A673 (cell line): ENCODE measurements at regions of chr1 and their contacts with region 1.

Region 1: DNA sequence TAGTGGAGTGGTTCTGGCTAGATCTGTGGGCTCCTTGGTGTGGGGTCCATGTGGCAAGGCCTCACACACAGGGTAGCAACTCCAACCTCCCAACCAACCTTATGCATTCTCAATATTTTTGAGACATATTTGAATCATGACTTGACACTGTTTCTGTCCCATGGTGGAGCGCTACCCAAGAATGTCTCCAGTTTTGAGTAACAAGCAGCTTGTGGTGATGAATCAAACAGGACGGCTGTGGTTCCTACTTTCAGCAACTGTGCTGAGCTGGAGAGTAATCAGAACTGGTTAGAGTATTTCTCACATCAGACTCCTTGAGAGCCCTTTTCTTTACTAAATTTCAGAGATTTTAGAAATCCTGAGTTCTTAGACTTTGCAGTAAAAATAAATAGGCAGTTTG is 3.1 kb downstream of the LCE3D start:
- DNase-seq: no peak
- H3K4me3 ChIP-seq: no peak overlapping the region
- H3K27ac ChIP-seq: no peak overlapping the region
- H3K4me1 ChIP-seq: no peaks in the 10 kb centered on the region
- H3K27me3 ChIP-seq: peaks cover 17% of the 10 kb centered on the region
- CTCF ChIP-seq: no peak

Region 2: DNA sequence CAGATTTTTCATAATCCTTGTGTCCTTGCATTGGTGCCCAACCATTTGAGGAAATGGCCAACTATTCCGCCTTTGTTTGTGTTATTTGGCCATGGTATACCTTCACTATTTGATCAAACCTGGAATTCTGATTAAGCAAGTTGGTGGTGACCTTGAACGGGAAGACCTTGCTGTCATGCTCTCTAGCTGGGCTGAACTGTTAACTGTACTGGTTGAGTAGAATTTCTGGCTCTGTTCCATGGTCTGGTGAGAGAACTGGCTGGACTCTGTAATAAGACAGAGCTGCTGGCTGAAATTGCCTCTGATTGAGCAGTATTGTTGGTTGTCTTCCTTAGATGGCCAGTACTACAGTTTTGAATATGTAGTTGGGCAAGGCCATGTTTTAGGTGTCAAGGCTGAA is 19.8 kb after region 1 on chr1:
- CTCF ChIA-PET with region 1: no interaction called
- POLR2A ChIA-PET with region 1: no interaction called
- intact Hi-C with region 1: no loop called
- DNase-seq: no peak
- H3K4me3 ChIP-seq: no peak overlapping the region
- H3K27ac ChIP-seq: no peak overlapping the region
- H3K4me1 ChIP-seq: no peaks in the 10 kb centered on the region
- H3K27me3 ChIP-seq: no peaks in the 10 kb centered on the region
- CTCF ChIP-seq: no peak

Region 3: GRCh38 chr1:152630632-152631031 is 53.5 kb after region 1 on chr1:
- CTCF ChIA-PET with region 1: no interaction called
- POLR2A ChIA-PET with region 1: no interaction called
- intact Hi-C with region 1: loop called (anchors 5 kb)
- DNase-seq: no peak
- H3K4me3 ChIP-seq: no peak overlapping the region
- H3K27ac ChIP-seq: no peak overlapping the region
- H3K4me1 ChIP-seq: no peaks in the 10 kb centered on the region
- H3K27me3 ChIP-seq: no peaks in the 10 kb centered on the region
- CTCF ChIP-seq: no peak